H1 (cell line): ENCODE measurements at regions of chr11 and their contacts with region 1.

Region 1: GRCh38 chr11:57345555-57346211 is 7.5 kb downstream of the P2RX3 start:
- DNase-seq: peak in 1 of 2 experiments; percentile 85
- H3K4me3 ChIP-seq: no peak overlapping the region
- H3K27ac ChIP-seq: no peak overlapping the region
- H3K4me1 ChIP-seq: peaks cover 5 to 15% (median 8%) of the 10 kb centered on the region in 4 experiments; a peak in 6 of 7 replicates
- H3K27me3 ChIP-seq: peaks cover 0 to 6% (median 4%) of the 10 kb centered on the region in 4 experiments; a peak in 4 of 7 replicates
- CTCF ChIP-seq: peak; percentile 61 to 76 (median 73)
- EP300 ChIP-seq: no peak
- POLR2A ChIP-seq: no peak
- RAD21 ChIP-seq: peak; percentile 84 to 89

Region 2: DNA sequence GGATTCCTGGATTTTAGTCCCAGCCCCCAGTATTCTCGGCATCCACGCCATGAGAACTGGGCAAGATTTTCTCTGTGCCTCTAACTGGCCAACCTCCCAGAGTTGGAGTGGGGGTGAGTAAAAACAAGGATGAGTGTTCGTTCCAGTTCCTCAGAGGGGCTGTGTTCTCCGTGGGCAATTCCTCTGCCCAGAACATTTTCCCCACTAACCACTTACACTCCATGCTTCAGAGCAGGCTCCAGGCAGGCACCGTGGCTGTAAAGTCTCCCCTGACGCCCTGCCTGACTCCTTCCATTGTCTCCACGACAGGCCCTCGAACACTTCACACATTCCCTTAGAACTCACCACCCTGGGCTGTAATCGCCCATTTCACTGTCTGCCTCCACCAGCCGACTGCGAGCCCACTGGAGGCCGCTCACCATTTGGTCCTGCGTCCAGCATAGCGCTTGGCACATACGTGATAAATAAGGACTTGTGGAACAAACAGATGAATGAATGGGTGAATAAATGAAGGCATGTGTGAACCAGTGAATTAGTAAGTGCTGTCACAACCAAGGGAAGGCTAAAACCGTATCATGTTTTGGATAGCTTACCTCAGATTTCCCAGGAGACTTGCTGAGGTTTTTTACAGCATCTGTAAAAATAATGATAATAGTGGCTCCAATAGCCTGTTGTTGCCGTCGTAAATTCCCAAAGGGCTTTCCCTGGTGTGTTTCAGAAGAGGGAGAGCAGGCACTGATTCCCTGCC is 114.7 kb before region 1 on chr11:
- CTCF ChIA-PET with region 1: no interaction called
- POLR2A ChIA-PET with region 1: no interaction called
- DNase-seq: no peak
- H3K4me3 ChIP-seq: no peak overlapping the region
- H3K27ac ChIP-seq: no peak overlapping the region
- H3K4me1 ChIP-seq: peaks cover 0 to 4% (median 0%) of the 10 kb centered on the region in 4 experiments; a peak in 2 of 7 replicates
- H3K27me3 ChIP-seq: no peaks in the 10 kb centered on the region; a peak in 3 of 7 replicates
- CTCF ChIP-seq: no peak
- EP300 ChIP-seq: no peak
- POLR2A ChIP-seq: no peak
- RAD21 ChIP-seq: no peak

Region 3: GRCh38 chr11:57358543-57358961 is 12.9 kb after region 1 on chr11:
- CTCF ChIA-PET with region 1: interaction called, 24 read pairs
- POLR2A ChIA-PET with region 1: interaction called, 5 read pairs
- DNase-seq: no peak
- H3K4me3 ChIP-seq: no peak overlapping the region
- H3K27ac ChIP-seq: no peak overlapping the region
- H3K4me1 ChIP-seq: peaks cover 0 to 6% (median 1%) of the 10 kb centered on the region in 4 experiments; a peak in 3 of 7 replicates
- H3K27me3 ChIP-seq: no peaks in the 10 kb centered on the region; a peak in 1 of 7 replicates
- CTCF ChIP-seq: no peak
- EP300 ChIP-seq: no peak
- POLR2A ChIP-seq: no peak
- RAD21 ChIP-seq: no peak